ENCODE measurements at regions of chr11 and their contacts with region 1.

Region 1: DNA sequence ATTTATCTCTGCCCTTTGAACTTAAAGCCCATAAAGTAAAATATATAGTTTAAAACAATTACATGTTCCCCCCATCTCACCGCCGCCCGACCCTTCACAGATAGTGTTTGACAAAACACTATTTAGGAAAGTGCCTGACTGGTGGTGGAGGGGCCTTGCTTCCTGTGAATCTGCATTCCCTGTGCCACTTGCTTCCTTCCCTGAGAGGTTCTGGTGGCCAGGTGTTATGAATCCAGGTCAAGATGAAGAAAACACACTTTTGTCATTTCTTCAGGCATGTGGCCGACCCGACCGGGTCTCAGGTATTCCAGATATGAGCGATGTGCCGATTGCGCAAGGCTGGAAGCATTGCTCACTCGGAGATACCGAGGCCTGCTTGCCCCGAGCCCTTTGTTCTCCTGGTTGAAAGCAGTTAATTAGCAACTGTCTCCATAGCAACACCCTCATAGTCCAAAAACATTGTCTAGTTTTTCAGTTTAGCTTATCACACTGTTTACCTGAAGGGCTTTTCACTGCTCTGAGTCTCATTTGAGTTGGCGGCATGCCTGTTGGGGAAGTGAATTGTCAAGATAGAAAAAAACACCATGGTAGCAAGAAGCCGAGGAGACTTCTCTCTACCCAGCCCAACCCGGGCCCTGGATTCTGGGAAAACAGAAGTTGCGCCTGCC is 128.3 kb downstream of the TEAD1 start:
- DNase-seq: peak; percentile 94
- H3K4me3 Mint-ChIP-seq: peak overlapping the region; percentile 22
- H3K27ac Mint-ChIP-seq: peak overlapping the region; percentile 91
- H3K4me1 Mint-ChIP-seq: peaks cover 66% of the 10 kb centered on the region
- H3K27me3 Mint-ChIP-seq: no peaks in the 10 kb centered on the region
- CTCF ChIP-seq: no peak

Region 2: GRCh38 chr11:12540913-12541582 is 261.5 kb before region 1 on chr11:
- CTCF ChIA-PET with region 1: no interaction called
- POLR2A ChIA-PET with region 1: no interaction called
- intact Hi-C with region 1: loop called (anchors 5 kb)
- DNase-seq: peak; percentile 48
- H3K4me3 Mint-ChIP-seq: no peak overlapping the region
- H3K27ac Mint-ChIP-seq: no peak overlapping the region
- H3K4me1 Mint-ChIP-seq: peaks cover 58% of the 10 kb centered on the region
- H3K27me3 Mint-ChIP-seq: no peaks in the 10 kb centered on the region
- CTCF ChIP-seq: no peak

Region 3: DNA sequence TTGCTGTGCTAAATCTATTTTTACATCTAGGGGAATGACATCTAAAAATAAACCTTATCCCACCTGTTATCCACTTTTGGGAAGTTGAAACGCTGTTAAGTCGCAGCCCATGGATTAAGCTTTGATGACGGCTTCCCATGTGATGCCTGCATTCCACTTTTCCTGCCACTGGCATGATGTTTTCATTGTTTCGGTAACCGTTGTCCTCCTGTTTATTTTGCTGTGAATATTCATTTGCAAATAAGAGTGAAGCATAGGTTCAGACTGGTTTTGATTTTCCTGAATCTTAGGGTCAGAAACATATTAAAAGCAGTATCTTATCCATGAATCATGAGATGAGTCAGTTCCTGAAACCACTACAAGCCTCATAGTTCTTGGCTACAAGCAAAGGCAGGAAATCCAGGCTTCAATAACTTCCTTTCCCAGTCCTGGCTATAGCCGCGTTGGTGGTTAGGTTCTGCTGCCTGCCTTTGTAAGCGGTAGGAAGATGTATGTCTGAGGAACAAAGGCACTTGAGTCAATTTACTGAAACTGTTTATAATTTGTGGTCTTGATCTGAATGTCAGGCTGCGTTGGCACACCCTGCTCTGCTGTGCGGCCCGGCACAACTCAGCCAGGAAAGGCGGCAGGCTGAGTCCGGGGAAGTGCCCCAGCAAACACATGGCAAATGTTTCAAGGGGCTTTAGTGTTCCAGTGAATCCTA is 108.9 kb before region 1 on chr11:
- CTCF ChIA-PET with region 1: no interaction called
- POLR2A ChIA-PET with region 1: interaction called, 23 read pairs
- intact Hi-C with region 1: no loop called
- DNase-seq: peak; percentile 97
- H3K4me3 Mint-ChIP-seq: peak overlapping the region; percentile 62
- H3K27ac Mint-ChIP-seq: peak overlapping the region; percentile 94
- H3K4me1 Mint-ChIP-seq: peaks cover 75% of the 10 kb centered on the region
- H3K27me3 Mint-ChIP-seq: no peaks in the 10 kb centered on the region
- CTCF ChIP-seq: no peak

Region 4: GRCh38 chr11:12769834-12770345 is 32.7 kb before region 1 on chr11:
- CTCF ChIA-PET with region 1: interaction called, 3 read pairs
- POLR2A ChIA-PET with region 1: interaction called, 32 read pairs
- intact Hi-C with region 1: no loop called
- DNase-seq: peak; percentile 86
- H3K4me3 Mint-ChIP-seq: no peak overlapping the region
- H3K27ac Mint-ChIP-seq: no peak overlapping the region
- H3K4me1 Mint-ChIP-seq: peaks cover 22% of the 10 kb centered on the region
- H3K27me3 Mint-ChIP-seq: no peaks in the 10 kb centered on the region
- CTCF ChIP-seq: no peak

Region 5: DNA sequence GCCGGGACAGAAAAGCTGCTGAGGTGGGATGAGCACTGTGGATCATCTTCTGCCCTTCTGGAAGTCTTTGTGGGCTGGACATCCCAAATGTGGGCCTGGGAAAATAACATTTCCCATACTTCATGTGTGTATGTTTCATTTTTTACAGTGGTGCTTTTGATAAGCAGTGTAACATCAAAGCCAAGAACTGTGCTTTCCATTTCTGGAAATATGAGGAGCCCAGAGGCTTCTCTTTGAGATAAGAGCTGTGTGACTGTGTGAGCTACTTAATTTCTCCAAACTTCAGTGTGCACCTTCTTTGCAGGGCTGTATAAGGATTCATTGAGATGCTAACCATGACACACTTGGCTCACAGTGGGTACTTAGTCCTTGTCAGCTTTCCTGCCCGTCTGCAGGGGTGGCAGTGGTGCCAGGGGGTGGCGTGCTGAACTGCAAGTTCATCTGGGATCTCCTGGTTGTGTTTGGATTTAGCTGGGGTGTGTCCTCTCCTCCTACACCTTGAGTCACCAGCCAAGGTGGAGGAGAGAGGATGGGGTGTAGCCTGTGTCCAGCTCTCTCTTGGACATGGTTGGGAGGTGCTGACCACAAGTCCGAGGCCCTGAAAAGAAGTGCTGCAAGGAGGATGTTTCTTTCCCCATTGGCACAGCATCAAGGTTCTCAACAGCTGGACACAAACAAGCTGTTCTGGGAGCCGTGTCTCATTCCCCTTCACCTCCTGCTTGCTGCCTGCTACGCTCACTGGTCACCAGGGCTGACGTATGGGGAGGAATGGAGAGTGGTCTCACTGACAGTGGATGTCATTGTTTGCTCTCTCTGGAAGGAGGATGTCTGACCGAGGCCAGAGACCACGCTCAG is 11.0 kb after region 1 on chr11:
- CTCF ChIA-PET with region 1: interaction called, 5 read pairs
- POLR2A ChIA-PET with region 1: interaction called, 15 read pairs
- intact Hi-C with region 1: no loop called
- DNase-seq: peak; percentile 75
- H3K4me3 Mint-ChIP-seq: no peak overlapping the region
- H3K27ac Mint-ChIP-seq: peak overlapping the region; percentile 26
- H3K4me1 Mint-ChIP-seq: peaks cover 57% of the 10 kb centered on the region
- H3K27me3 Mint-ChIP-seq: no peaks in the 10 kb centered on the region
- CTCF ChIP-seq: peak; percentile 23

Region 6: DNA sequence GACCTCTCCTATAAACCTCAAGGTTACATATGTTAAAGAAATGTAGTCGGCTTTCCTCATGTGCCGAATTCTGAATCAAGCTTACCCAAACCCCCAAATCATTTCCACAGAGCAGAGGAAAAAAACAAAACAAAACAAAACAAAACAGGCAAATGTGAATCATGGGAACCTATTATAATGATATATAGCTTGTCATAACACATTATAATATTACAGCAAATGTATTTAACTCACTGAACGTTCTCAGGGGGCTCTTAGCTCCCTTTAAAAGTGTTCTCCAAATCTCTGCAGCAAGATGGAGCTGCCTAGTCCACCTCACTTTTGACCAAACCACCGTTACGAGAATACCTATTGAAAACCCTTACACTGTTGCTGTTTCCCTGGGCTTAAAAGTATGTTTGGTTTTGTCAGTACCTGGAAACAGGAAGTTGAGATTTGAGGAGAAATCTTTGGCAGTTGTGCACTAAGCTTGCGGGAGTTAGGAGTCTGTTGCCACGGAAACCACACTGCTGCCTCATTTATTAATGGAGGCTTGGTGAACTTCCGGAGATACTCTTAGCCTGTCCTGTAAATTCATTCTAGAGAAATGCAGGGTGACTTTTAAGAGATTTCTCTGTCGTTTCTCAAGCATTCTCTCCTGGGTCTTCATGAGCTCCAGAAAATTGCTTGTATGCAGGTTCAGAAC is 39.5 kb after region 1 on chr11:
- CTCF ChIA-PET with region 1: interaction called, 5 read pairs
- POLR2A ChIA-PET with region 1: interaction called, 49 read pairs
- intact Hi-C with region 1: no loop called
- DNase-seq: peak; percentile 62
- H3K4me3 Mint-ChIP-seq: no peak overlapping the region
- H3K27ac Mint-ChIP-seq: peak overlapping the region; percentile 83
- H3K4me1 Mint-ChIP-seq: peaks cover 47% of the 10 kb centered on the region
- H3K27me3 Mint-ChIP-seq: no peaks in the 10 kb centered on the region
- CTCF ChIP-seq: no peak